Astrocyte of the cerebellum (primary cell): ENCODE measurements at regions of chr15 and their contacts with region 1.

Region 1: GRCh38 chr15:26157081-26157480 is 294.0 kb upstream of the ATP10A start:
- DNase-seq: no peak
- H3K4me3 ChIP-seq: no peak overlapping the region
- CTCF ChIP-seq: no peak

Region 2: GRCh38 chr15:26212109-26212508 is 55.0 kb after region 1 on chr15:
- in situ Hi-C with region 1: loop called (anchors 5 kb)
- DNase-seq: no peak
- H3K4me3 ChIP-seq: no peak overlapping the region
- CTCF ChIP-seq: no peak

Region 3: GRCh38 chr15:26355472-26356074 is 198.5 kb after region 1 on chr15:
- in situ Hi-C with region 1: loop called (anchors 25 kb)
- DNase-seq: no peak
- H3K4me3 ChIP-seq: no peak overlapping the region
- CTCF ChIP-seq: no peak

Region 4: DNA sequence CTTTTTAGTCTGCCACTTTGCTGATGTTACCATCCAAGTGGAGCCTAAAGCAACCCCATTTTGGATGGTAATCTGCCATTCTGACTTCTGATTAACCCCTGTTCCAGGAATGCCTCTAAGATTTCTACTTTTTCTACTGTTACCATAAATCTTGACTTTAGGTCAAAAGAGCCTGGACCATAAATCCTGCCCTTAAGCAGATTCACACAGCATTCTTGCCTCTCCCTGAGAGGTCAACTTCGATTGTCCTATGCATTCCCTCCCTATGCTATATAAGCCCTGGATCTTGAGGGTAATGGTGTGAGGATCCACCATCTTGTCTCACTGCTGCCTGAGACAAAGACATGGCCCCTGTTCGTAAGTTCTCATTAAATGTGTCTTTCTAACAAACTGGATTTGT is 438.5 kb after region 1 on chr15:
- in situ Hi-C with region 1: no loop called
- DNase-seq: no peak
- H3K4me3 ChIP-seq: no peak overlapping the region
- CTCF ChIP-seq: no peak